ENCODE measurements at regions of chr2 and their contacts with region 1.

Region 1: DNA sequence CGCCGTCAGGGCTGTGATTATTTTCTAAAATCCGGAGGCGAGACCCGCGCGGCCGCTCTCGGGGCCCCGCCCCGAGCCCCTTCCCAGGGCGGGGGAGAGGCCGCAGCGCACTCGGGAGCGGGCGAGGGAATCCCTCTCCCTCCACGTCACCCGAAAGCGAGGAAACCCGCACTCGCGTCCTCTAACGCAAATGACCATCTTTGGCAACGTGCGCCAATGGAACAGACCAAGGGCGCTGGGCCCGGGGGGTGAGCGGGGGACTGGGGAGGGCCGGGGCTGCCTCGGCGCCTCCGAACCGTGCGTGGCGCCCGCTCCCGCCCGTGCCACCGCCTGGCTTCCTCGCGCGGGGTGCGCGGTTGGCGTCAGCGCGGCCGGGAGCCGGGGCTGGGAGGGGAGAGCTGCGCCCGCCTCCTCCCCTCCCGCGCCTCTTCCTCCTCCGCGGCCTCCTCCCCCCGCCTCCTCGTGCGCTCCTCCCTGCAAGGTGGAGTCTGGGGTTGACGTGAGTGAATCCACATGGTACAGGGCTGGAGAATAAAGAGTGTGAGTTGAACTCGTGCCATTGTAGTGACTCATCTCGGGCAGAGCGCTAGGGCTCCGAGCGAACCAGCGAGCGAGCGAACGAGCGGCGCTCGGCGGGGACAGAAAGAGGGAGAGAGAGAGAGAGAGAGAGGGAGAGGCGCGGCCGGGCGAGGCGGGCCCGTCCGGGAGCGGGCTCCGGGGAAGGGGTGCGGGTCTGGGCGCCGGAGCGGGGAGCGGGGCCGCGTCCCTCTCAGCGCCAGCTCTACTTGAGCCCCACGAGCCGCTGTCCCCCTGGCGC is at the start of gene FOSL2:
- DNase-seq: peak; percentile 98 to 99
- H3K4me3 ChIP-seq: peak within 1 kb of the TSS; percentile 96 to 97
- H3K27ac ChIP-seq: peak within 1 kb of the TSS; percentile 99 to 100
- H3K4me1 ChIP-seq: peaks cover 1 to 20% (median 12%) of the 10 kb centered on the region in 4 donors
- H3K27me3 ChIP-seq: no peaks in the 10 kb centered on the region
- CTCF ChIP-seq: peak in 1 of 2 experiments; percentile 19

Region 2: GRCh38 chr2:27703638-27704341 is 688.7 kb before region 1 on chr2:
- intact Hi-C with region 1: loop called (anchors 2 kb)
- DNase-seq: peak; percentile 92 to 93
- H3K4me3 ChIP-seq: no peak overlapping the region
- H3K27ac ChIP-seq: peak overlapping the region; percentile 94 to 97
- H3K4me1 ChIP-seq: peaks cover 4 to 53% (median 41%) of the 10 kb centered on the region in 4 donors
- H3K27me3 ChIP-seq: no peaks in the 10 kb centered on the region
- CTCF ChIP-seq: peak; percentile 88 to 95

Region 3: GRCh38 chr2:27890146-27890923 is 502.2 kb before region 1 on chr2 and contains the starts of genes BABAM2 and RBKS:
- intact Hi-C with region 1: loop called (anchors 2 kb)
- DNase-seq: peak; percentile 85 to 94
- H3K4me3 ChIP-seq: peak within 1 kb of the TSS; percentile 61 to 82
- H3K27ac ChIP-seq: peak within 1 kb of the TSS; percentile 90 to 95
- H3K4me1 ChIP-seq: peaks cover 0 to 47% (median 19%) of the 10 kb centered on the region in 4 donors
- H3K27me3 ChIP-seq: no peaks in the 10 kb centered on the region
- CTCF ChIP-seq: no peak

Region 4: GRCh38 chr2:27954771-27955383 is 437.6 kb before region 1 on chr2:
- intact Hi-C with region 1: loop called (anchors 10 kb)
- DNase-seq: peak; percentile 83 to 87
- H3K4me3 ChIP-seq: no peak overlapping the region
- H3K27ac ChIP-seq: peak overlapping the region; percentile 44
- H3K4me1 ChIP-seq: peaks cover 0 to 39% (median 16%) of the 10 kb centered on the region in 4 donors
- H3K27me3 ChIP-seq: no peaks in the 10 kb centered on the region
- CTCF ChIP-seq: peak; percentile 30 to 34

Region 5: DNA sequence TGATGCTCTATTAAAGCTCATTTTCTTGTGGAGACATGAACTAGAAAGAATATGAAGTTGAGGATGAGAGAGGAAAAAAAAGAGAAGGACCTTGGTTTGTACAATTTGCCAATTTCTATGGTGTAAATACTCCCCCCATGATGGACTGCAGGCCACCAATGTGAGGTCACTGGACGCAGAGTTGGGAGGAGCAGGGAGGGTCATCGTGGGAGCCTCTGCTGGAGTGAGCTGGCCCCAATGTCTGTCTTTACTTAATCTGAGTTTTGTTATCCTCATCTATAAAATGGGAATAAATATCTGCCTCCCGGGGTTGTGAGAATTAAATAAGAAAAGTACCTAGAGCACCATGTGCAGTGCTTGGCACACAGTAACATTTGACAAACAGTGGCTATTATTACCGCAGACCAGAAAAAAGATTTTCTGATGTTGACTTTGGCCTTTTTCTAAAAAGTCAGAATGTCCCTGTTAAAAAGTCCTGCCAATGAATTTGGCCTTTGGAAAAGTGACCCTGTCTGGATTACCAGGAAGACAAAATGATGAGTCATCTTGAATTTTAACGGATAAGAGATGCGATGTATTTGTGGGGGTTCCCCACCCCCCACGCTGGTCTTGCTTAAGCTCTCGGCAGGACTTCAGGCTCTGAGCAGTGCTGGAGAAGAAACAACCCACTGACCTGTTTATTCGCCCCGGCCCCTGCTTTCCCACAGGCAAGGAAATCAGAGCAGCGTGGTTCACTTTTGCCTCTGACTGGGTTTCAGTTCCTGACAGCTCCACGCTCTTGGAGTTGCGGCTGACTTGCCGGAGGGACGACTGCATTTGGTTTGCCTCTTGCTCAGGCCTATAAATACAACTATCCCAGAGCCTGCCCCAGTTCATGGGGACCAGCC is 50.2 kb before region 1 on chr2:
- intact Hi-C with region 1: loop called (anchors 5 kb)
- DNase-seq: peak; percentile 89 to 94
- H3K4me3 ChIP-seq: peak overlapping the region; percentile 25 to 30
- H3K27ac ChIP-seq: peak overlapping the region; percentile 83 to 84
- H3K4me1 ChIP-seq: peaks cover 0 to 71% (median 62%) of the 10 kb centered on the region in 4 donors
- H3K27me3 ChIP-seq: no peaks in the 10 kb centered on the region
- CTCF ChIP-seq: no peak

Measured in tibial artery (tissue), 4 donors.